Naive thymus-derived CD8-positive, alpha-beta T cell (primary cell): ENCODE measurements at regions of chr10 and their contacts with region 1.

Region 1: DNA sequence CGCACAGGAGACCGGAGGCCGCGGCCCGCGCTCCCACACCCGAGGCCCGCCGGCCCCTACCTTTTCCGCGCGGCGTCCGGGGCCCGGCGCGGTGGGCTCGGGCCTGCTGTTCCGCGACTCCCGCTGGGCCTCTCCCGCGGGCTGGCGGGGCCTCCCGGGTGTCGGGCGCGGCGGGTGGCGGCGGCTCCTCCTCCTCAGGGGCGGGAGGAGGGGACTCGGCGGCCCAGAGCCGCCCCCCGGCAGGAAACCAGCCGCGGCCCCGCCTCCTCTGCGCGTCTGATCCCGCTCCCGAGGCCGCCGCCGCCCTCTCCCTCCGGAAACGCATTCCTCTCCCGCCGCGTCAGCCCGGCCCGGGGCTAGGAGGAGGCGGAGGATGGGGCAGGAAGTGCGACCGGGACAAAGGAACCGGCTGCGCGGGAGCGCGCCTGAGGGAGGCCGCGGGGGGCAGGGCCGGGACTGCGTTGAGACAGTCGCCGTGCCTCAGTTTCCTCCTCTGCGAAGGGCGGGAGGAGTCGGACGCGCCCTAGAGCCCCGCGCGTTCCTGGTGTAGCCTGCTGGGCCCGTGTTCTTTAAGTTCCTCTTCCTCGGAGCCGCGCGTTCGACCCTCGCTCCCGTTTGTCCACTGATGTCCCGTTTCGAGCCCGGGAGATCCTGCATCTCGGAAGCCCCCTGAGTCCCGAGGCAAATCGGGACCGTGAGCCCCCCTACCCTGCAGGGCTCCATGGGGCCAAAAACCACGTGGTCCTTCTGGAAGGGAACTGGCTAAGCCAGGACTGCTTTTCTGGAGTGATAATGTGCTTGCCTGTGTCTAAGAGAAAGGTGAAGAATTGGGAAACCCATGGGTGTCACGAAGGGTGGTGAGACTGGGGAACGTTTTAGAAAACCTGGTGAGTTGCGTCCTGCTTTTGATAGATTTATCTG is at the start of gene ITGB1:
- DNase-seq: peak; percentile 73 to 88 (median 82)
- ATAC-seq: peak; percentile 85 to 87
- H3K4me3 Mint-ChIP-seq: peak within 1 kb of the TSS; percentile 82 to 95 (median 90)
- H3K27ac Mint-ChIP-seq: peak within 1 kb of the TSS; percentile 83 to 95 (median 92)
- H3K4me1 Mint-ChIP-seq: peaks cover 16 to 73% (median 38%) of the 10 kb centered on the region in 4 donors
- H3K27me3 Mint-ChIP-seq: no peaks in the 10 kb centered on the region
- polyA plus RNA-seq, gene ITGB1: 26.1 to 107 (median 28.9) TPM

Region 2: DNA sequence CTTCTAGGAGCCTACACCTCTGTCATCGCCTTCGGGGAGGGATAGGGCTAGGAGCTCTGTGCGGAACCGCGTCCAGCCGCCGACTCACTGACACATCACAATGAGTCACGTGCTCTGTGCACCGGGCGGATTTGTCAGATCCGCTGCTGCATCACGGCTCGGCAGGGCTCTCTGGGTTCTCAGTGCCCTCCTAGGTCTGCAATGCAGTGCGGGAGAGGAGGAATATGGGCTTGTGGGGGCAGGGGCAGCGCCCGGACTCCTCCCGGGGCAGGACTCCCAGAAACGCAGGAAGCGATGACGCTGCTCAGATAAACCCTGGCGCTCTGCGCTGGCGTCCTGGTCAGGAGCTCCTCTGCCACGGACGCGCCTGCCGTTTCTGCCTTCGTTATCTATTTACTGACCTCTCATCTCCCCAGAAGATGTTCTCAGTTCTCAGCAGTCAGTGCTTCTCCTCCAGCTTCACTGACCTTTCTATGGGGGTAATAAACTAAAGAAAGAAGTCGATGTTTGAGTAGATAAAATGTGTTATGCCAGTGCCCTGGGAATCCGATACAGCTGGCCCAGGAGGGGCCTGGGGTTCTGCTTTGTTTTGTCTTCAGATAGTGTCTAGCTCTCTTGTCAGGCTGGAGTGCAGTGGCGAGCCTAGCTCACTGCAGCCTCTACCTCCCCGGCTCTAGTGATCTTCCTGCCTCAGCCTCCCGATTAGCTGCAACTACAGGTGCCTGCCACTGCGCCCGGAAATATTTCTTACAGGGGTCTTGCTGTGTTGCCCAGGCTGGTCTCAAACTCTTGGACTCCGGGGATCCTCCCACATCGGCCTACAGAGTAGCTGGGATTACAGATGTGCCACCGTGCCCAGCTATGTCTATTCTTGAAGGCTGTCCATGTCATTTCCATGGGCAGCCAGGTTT is 22.5 kb after region 1 on chr10:
- POLR2A ChIA-PET with region 1: interaction called, 14 read pairs
- DNase-seq: peak; percentile 57 to 85 (median 70)
- ATAC-seq: peak; percentile 94 to 97
- H3K4me3 Mint-ChIP-seq: peak overlapping the region; percentile 93 to 98 (median 96)
- H3K27ac Mint-ChIP-seq: peak overlapping the region; percentile 91 to 97 (median 94)
- H3K4me1 Mint-ChIP-seq: peaks cover 10 to 48% (median 21%) of the 10 kb centered on the region in 4 donors
- H3K27me3 Mint-ChIP-seq: peaks cover 0 to under 1% (median 0%) of the 10 kb centered on the region in 5 donors